ENCODE measurements at regions of chr1 and their contacts with region 1.

Region 1: DNA sequence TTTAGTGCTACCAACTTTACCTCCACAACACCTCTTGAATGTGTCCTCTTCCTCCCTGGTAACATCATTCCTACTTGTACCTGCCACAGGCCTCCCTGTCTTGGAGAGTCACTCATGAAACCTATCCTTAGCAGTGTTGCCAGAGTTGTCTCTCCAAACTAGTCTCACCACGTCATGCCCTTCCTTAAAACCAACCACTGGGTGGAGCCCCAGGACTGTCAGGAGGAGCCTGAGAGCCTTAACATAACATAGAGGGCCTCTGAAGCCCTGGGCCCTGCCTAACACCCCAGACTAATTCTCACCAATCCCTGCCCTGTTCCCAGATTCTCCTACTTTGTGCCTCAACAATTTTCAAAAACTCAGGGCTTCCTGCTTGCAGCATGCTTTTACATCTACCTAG is 65.3 kb downstream of the ZNF697 start:
- DNase-seq: no peak
- ATAC-seq: peak; percentile 88
- H3K4me3 ChIP-seq: no peak overlapping the region
- H3K27ac ChIP-seq: no peak overlapping the region
- H3K4me1 ChIP-seq: no peaks in the 10 kb centered on the region
- H3K27me3 ChIP-seq: no peaks in the 10 kb centered on the region; a peak in 1 of 4 replicates
- CTCF ChIP-seq: peak; percentile 39 to 49 (median 47)
- EP300 ChIP-seq: no peak
- POLR2A ChIP-seq: no peak
- RAD21 ChIP-seq: peak; percentile 50

Region 2: DNA sequence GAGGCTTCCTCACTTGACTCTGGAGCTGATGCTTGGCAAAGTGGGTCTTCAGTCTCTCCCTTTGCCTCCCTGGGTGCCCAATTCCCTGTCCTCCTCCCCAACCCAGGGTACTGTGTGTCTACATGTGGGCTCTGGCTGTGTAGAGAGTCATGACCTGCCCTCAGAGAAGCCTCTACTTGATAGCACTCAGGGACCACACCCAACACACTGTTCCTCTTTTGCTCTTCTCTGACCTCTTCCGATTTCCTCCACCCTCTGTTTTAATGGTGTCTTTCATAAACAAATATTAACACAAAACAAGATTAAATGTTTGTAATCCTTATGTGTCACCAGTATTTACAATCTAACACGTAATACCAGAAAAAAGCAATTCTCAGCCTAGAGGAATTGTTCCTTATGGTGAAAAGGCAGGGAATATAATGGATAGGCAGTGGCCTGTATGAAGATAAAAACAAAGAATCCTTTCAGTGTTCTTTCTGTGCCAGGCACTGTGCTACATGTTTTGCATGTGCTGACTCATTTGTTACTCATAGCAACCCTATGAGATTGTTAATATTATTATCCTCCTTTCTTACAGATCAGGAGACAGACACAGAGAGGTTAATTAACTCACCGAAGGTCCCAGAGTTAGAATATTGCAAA is 17.5 kb before region 1 on chr1:
- CTCF ChIA-PET with region 1: no interaction called
- POLR2A ChIA-PET with region 1: no interaction called
- RAD21 ChIA-PET with region 1: no interaction called
- SMC1A ChIA-PET with region 1: no interaction called
- in situ Hi-C with region 1: no loop called
- intact Hi-C with region 1: no loop called
- DNase-seq: peak; percentile 9
- ATAC-seq: peak; percentile 89
- H3K4me3 ChIP-seq: 0 out of 2 replicates have a peak overlapping the region, but pooled peaks have one; percentile 3
- H3K27ac ChIP-seq: peak overlapping the region; percentile 47
- H3K4me1 ChIP-seq: peaks cover 16% of the 10 kb centered on the region
- H3K27me3 ChIP-seq: no peaks in the 10 kb centered on the region; a peak in 1 of 4 replicates
- CTCF ChIP-seq: no peak
- EP300 ChIP-seq: no peak
- POLR2A ChIP-seq: 0 out of 2 replicates have a peak, but pooled peaks have one; percentile 21
- RAD21 ChIP-seq: no peak

Region 3: DNA sequence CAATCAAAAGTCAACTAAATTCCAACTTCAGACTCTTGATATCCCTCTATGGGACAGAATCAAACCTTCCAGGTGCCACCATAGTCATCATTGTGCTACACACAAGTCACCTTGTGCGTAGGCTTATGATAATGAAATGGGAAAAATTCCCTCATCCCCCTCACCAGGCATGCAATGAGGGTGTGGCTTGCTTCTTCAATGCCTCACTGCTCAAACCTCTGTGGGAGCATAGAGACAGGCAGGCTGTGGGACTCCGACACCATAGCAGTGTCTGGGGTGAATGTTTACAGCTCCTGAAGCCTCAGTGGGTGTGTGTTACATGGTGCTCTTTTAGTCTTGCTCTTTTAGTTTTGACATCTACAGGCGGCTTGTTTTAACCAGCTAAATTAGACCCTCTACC is 22.9 kb after region 1 on chr1:
- CTCF ChIA-PET with region 1: interaction called, 3 read pairs
- POLR2A ChIA-PET with region 1: no interaction called
- RAD21 ChIA-PET with region 1: no interaction called
- SMC1A ChIA-PET with region 1: no interaction called
- in situ Hi-C with region 1: no loop called
- intact Hi-C with region 1: loop called (anchors 2 kb)
- DNase-seq: no peak
- ATAC-seq: no peak
- H3K4me3 ChIP-seq: no peak overlapping the region
- H3K27ac ChIP-seq: no peak overlapping the region
- H3K4me1 ChIP-seq: no peaks in the 10 kb centered on the region
- H3K27me3 ChIP-seq: no peaks in the 10 kb centered on the region; a peak in 3 of 4 replicates
- CTCF ChIP-seq: no peak
- EP300 ChIP-seq: no peak
- POLR2A ChIP-seq: no peak
- RAD21 ChIP-seq: no peak